ENCODE measurements at regions of chr1 and their contacts with region 1.

Region 1: DNA sequence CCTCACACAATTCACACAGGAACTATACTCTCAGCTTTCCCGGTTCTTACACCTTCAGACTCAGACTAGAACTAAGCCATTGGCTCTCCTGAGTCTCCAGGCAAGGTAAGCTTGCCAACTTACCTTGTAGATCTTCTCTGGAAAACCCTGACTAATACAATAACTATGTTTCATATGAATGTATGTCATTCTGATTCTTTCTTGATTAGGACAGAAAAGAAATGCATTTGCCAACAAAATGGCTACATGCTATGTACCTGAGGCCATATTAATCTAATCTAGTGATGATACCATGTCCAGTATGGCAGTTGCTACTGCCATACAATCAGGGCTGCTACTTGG is 9.8 kb upstream of the ZSWIM5 start:
- DNase-seq: no peak
- ATAC-seq: no peak
- H3K4me3 ChIP-seq: no peak overlapping the region
- H3K27ac ChIP-seq: no peak overlapping the region
- H3K4me1 ChIP-seq: no peaks in the 10 kb centered on the region
- H3K27me3 ChIP-seq: no peaks in the 10 kb centered on the region
- CTCF ChIP-seq: no peak
- POLR2A ChIP-seq: no peak

Region 2: DNA sequence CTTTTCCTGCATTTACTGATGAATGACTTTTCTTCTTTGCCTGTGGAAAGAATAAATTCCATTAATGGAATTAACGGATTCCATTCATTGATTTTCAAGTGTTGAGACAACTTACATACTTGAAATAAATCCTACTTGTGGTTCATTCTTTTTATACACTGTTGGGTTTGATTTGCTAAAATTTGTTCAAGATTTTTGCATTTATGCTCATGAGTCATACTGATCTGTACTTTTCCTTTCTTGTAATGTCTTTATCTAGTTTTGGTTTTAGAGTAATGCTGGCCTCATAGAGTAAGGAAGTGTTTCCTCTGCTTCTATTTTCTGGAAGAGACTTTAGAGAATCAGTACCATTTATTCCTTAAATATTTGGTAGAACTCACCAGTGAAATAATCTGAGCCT is 189.7 kb before region 1 on chr1:
- intact Hi-C with region 1: loop called (anchors 10 kb)
- DNase-seq: no peak
- ATAC-seq: no peak
- H3K4me3 ChIP-seq: no peak overlapping the region
- H3K27ac ChIP-seq: no peak overlapping the region
- H3K4me1 ChIP-seq: no peaks in the 10 kb centered on the region
- H3K27me3 ChIP-seq: no peaks in the 10 kb centered on the region
- CTCF ChIP-seq: no peak
- POLR2A ChIP-seq: no peak